A549 (cell line): ENCODE measurements at regions of chr10 and their contacts with region 1.

Region 1: DNA sequence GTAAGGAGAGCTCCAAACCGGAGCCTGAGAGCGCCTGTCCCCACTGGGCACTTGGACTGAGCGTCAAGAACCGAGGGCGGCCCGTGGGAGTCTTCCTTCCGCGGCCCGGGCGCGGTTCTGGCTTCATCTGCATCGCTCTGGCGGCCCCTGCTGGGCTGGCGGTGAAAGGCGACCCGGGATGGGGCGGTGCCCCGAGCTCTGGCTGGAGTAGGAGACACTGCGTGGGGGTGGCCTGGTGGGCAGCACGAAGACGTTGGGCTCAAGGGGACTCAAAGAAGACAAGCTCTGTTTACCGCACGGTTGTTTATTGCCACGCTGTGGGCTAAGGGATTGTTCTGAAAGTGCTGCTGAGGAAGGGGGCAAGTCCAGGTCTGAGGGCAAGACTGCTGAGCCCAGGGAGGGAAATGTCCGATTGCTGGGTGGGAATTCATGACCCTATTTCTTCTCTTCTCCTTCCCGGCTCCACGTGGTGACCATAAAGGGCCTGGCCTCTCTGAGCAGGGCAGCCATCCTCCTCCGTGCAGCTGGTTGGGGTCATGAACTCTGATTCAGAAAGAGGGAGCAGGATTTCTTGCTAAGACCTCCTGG is 29.8 kb downstream of the PLAU start:
- DNase-seq: peak; percentile 73
- ATAC-seq: peak; percentile 96 to 98
- H3K4me3 ChIP-seq: no peak overlapping the region
- H3K27ac ChIP-seq: peak overlapping the region; percentile 82 to 86
- H3K4me1 ChIP-seq: peaks cover 24% of the 10 kb centered on the region
- CTCF ChIP-seq: peak; percentile 96
- EP300 ChIP-seq: no peak
- POLR2A ChIP-seq: no peak
- RAD21 ChIP-seq: peak; percentile 97 to 100

Region 2: GRCh38 chr10:73855413-73855812 is 85.3 kb before region 1 on chr10:
- CTCF ChIA-PET with region 1: interaction called, 87 read pairs
- POLR2A ChIA-PET with region 1: no interaction called
- DNase-seq: no peak
- ATAC-seq: no peak
- H3K4me3 ChIP-seq: no peak overlapping the region
- H3K27ac ChIP-seq: no peak overlapping the region
- H3K4me1 ChIP-seq: peaks cover 33% of the 10 kb centered on the region
- CTCF ChIP-seq: no peak
- EP300 ChIP-seq: no peak
- POLR2A ChIP-seq: no peak
- RAD21 ChIP-seq: no peak

Region 3: GRCh38 chr10:73879296-73880173 is 61.2 kb before region 1 on chr10:
- CTCF ChIA-PET with region 1: interaction called, 936 read pairs
- POLR2A ChIA-PET with region 1: no interaction called
- DNase-seq: peak; percentile 75 to 89
- ATAC-seq: peak; percentile 87 to 93
- H3K4me3 ChIP-seq: no peak overlapping the region
- H3K27ac ChIP-seq: peak overlapping the region in 1 of 2 experiments; percentile 65; a peak in 3 of 6 replicates
- H3K4me1 ChIP-seq: peaks cover 27% of the 10 kb centered on the region
- CTCF ChIP-seq: peak; percentile 88
- EP300 ChIP-seq: no peak
- POLR2A ChIP-seq: no peak
- RAD21 ChIP-seq: peak; percentile 80

Region 4: GRCh38 chr10:73926152-73926764 is 14.5 kb before region 1 on chr10:
- CTCF ChIA-PET with region 1: interaction called, 196 read pairs
- POLR2A ChIA-PET with region 1: no interaction called
- DNase-seq: no peak
- ATAC-seq: no peak
- H3K4me3 ChIP-seq: no peak overlapping the region
- H3K27ac ChIP-seq: no peak overlapping the region
- H3K4me1 ChIP-seq: no peaks in the 10 kb centered on the region
- CTCF ChIP-seq: no peak
- EP300 ChIP-seq: no peak
- POLR2A ChIP-seq: no peak
- RAD21 ChIP-seq: no peak

Region 5: DNA sequence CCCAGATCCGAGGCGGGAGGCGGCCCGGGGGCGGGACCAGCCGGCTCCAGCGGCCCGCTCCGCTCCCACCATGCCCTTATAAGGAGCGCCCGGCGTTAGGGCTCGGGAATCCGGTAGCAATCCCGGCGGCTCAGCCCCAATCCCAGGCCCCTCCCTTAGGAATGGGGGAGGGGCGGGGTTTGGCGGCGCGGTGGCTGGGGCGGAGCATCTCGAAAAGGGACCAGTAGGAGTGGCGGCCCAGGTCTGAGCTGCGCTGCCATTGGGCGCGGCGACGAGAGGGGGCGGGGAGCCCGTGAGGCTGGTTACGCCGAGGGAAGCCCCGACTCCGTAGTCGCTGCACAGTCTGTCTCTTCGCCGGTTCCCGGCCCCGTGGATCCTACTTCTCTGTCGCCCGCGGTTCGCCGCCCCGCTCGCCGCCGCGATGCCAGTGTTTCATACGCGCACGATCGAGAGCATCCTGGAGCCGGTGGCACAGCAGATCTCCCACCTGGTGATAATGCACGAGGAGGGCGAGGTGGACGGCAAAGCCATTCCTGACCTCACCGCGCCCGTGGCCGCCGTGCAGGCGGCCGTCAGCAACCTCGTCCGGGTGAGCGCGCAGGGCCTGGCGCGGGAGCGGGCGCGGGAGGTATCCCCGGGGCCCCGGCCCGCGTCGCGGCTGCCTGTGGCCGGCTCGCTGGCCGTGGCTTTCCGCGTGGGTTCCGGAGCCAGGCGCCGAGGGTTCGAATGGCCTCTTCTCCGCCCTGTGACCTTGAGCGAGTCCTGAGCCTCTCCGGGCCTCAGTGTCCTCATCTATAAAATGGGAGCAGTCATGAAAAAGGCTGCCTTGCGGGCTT is 57.3 kb after region 1 on chr10 and contains the start of gene VCL:
- CTCF ChIA-PET with region 1: interaction called, 17 read pairs
- POLR2A ChIA-PET with region 1: no interaction called
- DNase-seq: peak; percentile 86 to 98
- ATAC-seq: peak; percentile 94 to 95
- H3K4me3 ChIP-seq: peak within 1 kb of the TSS; percentile 97
- H3K27ac ChIP-seq: peak within 1 kb of the TSS; percentile 95
- H3K4me1 ChIP-seq: peaks cover 36% of the 10 kb centered on the region
- CTCF ChIP-seq: no peak
- EP300 ChIP-seq: no peak
- POLR2A ChIP-seq: peak; percentile 99
- RAD21 ChIP-seq: 0 out of 5 replicates have a peak, but pooled peaks of 1 of the 2 experiments have one; percentile 16
- polyA plus RNA-seq, gene VCL: 101 and 112 TPM in 2 replicates

Region 6: GRCh38 chr10:74103560-74104248 is 163.0 kb after region 1 on chr10:
- CTCF ChIA-PET with region 1: interaction called, 18 read pairs
- POLR2A ChIA-PET with region 1: no interaction called
- DNase-seq: peak; percentile 48 to 51
- ATAC-seq: peak in 1 of 2 experiments; percentile 76; a peak in 3 of 6 replicates
- H3K4me3 ChIP-seq: no peak overlapping the region
- H3K27ac ChIP-seq: no peak overlapping the region
- H3K4me1 ChIP-seq: no peaks in the 10 kb centered on the region
- CTCF ChIP-seq: peak; percentile 58
- EP300 ChIP-seq: no peak
- POLR2A ChIP-seq: no peak
- RAD21 ChIP-seq: peak; percentile 59